Right ventricle myocardium superior (tissue), 1 donor: ENCODE measurements at regions of chrX and their contacts with region 1.

Region 1: DNA sequence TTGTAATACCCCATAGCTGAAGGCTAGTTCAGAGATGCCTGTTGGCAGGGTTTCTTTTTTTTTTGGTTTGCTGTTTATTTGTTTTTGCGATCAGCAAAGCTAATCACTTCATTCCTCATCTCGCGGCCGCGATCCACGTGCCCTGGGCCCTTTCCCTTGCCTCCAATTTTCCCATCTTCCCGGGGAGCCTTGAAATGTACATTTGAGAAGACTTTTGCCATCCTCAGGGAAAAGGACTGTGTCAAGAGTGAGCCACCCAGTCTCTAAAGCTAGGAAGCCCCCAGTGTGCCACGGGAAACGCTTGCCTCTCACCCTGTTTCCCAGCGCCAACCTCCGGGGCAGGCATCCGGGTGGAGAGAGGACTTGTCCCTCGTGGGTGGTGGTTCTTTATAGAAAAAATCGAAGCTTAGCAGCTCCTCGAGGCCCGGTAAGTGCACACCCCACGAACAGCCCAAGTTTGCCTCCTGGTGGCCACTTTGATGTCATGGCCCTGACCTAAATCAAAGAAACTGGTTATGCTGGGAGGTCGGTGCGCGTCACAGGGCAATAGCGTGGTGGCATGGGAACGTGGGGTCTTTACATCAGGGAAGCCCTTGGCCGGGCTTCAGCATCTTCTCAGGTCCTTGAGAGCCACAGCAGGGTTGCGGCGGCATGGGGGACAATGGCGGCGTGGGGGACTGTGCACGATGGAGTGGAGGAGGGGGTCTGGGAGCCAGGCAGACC is 42.0 kb downstream of the MAP7D3 start:
- DNase-seq: peak; percentile 73
- ATAC-seq: peak; percentile 57

Region 2: DNA sequence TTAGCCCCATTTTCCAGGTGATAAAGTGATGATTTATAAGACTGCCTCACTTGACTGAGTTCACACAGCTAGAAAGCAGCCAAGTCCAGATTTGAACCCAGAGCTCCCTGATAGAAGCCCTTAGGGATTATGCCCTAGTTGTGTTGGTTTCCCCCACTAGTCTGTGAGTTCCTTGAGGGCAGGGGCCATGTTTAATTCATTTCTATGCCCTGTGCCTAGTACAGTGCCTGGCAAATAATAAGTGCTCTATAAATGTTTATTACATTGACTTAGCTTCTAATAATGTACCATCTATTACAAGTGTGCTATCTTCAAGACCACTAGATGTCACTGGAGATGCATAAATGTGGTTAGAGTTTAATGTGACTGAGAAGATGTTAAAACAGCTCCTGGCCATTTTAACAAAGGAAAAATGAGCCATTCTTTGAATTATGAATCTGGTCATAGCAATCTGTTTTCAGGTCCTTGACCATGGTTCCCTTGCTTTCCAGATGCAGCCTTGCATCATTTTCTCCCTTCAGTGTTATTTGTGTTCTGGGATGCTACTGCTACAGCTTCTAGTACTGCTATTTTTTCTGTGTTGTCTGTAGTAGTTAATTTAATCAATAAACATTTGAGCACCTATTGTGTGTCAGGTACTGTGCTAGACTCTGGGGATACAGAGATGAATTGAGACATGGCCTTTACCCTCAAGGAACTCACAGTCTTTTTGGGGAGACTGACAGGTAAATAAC is 180.8 kb before region 1 on chrX:
- intact Hi-C with region 1: loop called (anchors 5 kb)
- DNase-seq: no peak
- ATAC-seq: peak; percentile 56

Region 3: DNA sequence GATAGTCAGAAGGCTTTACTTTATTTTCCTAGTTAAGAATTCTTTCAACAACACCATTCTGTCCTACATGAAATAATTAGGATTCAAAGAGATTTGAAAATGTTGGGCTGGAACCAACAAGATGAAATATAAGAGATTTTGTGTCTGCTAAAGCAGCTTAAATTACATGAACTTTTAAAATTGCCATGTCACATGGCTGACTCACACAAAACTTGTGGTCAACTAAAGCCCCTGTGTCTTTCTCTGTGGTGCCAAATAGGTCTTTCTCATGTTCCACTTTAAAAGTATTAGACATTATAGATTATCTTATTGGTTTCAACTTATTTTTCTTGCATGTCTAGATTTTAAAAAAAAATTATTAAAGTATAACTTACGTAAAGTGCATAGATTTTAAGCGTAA is 122.7 kb before region 1 on chrX:
- intact Hi-C with region 1: no loop called
- DNase-seq: no peak
- ATAC-seq: no peak

Region 4: GRCh38 chrX:136143711-136144110 is 65.5 kb before region 1 on chrX:
- intact Hi-C with region 1: no loop called
- DNase-seq: no peak
- ATAC-seq: no peak

Region 5: DNA sequence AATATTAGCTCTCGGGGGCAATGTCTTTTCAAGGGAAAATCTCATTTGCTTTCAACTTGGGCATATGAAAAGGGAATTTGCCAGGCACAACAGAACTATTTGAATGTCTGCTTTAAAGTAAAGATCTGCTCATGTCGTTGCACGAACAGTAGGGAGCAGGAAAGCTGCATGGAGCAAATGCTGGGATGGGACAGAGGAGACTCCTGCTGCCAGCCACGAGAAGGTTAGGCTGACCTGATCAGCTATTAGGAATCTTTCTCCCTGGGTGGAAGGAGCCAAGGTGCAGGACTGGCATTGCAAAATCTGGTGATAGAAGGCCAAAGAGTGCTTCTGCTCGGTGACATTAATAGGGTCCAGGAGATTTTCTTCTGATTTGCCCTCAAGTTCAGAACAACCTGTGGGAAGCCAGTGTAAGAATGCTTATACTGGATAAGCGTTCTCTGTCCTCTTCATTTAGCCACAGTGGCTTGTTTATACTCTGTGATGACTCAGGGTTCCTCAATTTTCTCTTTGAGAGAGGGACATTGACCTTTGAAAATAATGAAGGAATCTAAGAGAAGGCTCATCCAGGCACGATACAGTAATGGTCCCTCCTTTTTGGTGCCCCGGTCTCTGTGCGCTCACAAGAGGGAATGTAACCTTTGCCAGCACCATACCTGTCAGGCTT is 38.9 kb before region 1 on chrX:
- intact Hi-C with region 1: loop called (anchors 2 kb)
- DNase-seq: no peak
- ATAC-seq: peak; percentile 83

Region 6: DNA sequence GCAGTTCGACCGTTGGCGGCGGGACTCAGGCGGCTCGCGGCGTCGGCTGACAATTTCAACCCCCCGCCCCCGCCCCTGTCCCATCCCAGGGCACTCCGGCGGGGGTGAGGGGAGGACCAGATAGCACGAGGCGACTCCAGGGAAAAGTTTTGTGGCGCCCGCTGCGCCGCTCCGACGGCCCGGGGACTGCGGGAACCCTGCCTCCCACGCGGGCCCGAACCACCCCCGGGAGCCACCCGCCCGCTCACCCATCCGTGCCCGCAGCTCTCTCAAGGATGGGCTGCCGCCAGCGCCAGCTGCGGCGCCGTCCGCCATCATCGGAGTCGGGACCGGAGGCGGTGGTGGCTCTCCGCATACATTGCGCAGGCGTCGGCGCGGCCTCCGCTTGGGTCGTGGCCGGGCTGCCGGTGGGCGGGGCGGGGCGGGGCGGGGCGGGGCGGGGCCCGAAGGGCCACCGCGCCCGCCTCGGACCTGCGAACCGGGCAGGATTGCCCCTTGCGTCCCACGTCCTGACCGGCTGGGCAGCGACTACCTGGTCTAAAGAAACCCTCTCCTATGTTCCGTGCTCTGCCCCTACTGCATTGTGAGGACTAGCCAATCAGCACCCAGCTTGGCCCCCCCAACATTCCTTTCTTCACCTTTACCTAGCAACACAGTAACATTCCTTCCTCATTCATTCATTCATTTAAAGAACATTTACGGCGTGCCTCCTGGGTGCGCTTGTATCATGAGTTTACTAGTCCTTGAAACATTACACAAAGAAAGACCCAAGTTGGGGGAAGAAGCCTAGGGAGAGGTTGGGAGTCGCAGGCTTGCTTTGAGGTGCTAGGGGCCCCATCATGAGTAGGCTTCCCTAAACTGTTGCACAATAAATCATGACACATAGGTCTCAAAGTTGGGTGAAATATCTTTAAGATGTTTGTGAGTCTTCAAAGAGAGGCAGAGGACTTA is 42.1 kb after region 1 on chrX and contains the start of gene MAP7D3:
- intact Hi-C with region 1: loop called (anchors 10 kb)
- DNase-seq: peak; percentile 78
- ATAC-seq: peak; percentile 97
- total RNA-seq, gene MAP7D3: 11.4 TPM

Region 7: DNA sequence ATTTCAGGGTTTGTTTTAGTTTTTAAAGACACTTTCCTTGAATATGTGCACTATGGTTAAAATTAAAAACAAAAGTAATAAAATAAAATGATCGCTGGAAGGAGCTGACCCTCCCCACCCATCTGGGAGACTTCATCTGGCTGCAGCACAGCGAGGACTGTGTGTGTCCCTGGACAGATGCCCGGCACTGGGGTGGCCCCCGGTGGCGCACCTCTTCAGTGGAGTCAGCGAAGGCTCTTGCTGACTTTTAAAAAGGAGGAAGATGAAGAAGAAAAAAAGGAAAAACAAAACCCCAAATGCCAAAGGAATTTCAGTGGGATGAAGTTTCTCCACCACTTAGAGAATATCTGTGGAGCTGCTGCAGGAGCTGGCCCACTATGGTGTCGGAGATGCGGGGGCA is 86.2 kb after region 1 on chrX:
- intact Hi-C with region 1: no loop called
- DNase-seq: no peak
- ATAC-seq: no peak